BJ (cell line): ENCODE measurements at regions of chr19 and their contacts with region 1.

Region 1: DNA sequence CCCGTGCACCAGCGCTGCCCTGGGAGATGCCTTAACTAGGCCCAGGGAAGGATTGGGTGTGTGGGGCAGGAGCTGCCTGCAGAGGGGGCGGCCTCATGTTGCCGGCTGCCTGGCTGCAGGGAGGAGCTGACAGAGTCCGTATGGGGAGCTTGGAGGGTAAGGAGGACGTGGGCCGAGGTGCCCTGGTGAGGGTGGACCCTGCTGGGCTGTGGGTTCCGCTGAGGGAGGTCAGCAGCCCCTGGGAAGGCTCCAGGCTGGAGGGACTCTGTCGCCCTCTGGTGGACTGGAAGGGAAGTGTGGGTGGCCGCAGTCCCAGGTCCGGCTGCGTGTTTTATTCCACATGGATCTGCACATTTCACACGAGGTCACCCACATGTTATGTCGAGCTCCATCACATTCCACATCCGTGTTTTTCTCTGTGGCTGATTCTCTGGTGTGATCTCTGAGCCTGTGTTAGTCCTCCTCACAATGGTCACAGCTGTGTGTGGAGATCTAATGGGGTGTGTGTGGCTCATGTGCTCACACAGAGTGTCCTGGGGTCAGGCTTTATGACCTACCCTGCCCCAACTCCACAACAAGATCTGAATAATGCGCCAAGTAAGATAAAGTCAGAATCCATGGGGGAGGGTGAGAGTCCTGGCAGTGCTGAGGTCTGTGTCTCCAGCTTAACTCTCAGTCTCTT is 1.8 kb upstream of the CEACAM8 start:
- DNase-seq: no peak
- H3K4me3 ChIP-seq: no peak overlapping the region
- H3K27me3 ChIP-seq: peaks cover 10% of the 10 kb centered on the region
- CTCF ChIP-seq: peak; percentile 95

Region 2: DNA sequence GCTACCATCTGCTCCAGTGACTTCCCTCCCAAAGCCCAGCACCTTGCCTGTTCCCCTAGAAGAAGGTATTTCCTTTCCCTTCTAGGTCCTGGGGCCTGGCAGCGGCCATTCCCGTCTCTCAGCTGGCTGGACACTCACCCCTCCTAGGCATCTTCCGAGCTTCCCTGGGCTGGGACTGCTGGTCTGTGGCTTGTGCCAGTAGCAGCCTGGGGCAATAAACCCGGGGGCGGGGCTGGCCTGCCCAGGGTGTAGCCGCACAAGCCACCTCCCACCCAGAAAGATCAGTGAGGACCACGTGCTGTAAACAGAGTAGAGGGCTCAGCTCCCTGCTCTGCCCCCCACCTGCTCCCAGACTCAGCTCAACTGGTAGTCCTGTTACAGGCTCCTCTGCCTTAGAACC is 184.3 kb before region 1 on chr19:
- CTCF ChIA-PET with region 1: no interaction called
- POLR2A ChIA-PET with region 1: no interaction called
- DNase-seq: no peak
- H3K4me3 ChIP-seq: no peak overlapping the region
- H3K27me3 ChIP-seq: no peaks in the 10 kb centered on the region
- CTCF ChIP-seq: no peak

Region 3: GRCh38 chr19:42529248-42529764 is 67.2 kb before region 1 on chr19:
- CTCF ChIA-PET with region 1: no interaction called
- POLR2A ChIA-PET with region 1: no interaction called
- DNase-seq: no peak
- H3K4me3 ChIP-seq: no peak overlapping the region
- H3K27me3 ChIP-seq: peaks cover 6% of the 10 kb centered on the region; the same call in 1 of the 2 replicates
- CTCF ChIP-seq: peak; percentile 93

Region 4: GRCh38 chr19:42563352-42564210 is 33.0 kb before region 1 on chr19:
- CTCF ChIA-PET with region 1: interaction called, 26 read pairs
- POLR2A ChIA-PET with region 1: no interaction called
- DNase-seq: no peak
- H3K4me3 ChIP-seq: no peak overlapping the region
- H3K27me3 ChIP-seq: peaks cover 20% of the 10 kb centered on the region
- CTCF ChIP-seq: peak; percentile 80

Region 5: DNA sequence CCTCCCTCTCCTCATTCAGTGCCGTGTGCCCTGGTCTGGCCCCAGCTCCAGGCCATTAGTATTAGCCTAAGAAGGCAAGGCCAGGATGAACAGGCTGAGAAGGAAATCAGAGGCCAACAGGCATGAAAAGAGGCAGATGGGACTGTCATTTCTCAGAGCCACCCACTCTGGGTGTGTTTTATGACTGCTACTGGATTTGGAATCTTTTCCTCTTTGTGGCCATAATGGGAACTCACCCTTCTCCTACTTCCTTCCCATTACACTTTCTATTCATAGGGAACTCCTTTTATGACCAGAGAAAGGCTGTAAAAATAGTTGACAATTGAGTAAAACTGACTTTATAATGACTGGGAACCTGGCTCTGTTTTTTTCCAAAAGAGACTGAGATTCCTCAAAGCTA is 19.5 kb before region 1 on chr19:
- CTCF ChIA-PET with region 1: interaction called, 18 read pairs
- POLR2A ChIA-PET with region 1: no interaction called
- DNase-seq: no peak
- H3K4me3 ChIP-seq: no peak overlapping the region
- H3K27me3 ChIP-seq: peaks cover 7% of the 10 kb centered on the region; the same call in 1 of the 2 replicates
- CTCF ChIP-seq: no peak

Region 6: GRCh38 chr19:42584466-42584865 is 12.1 kb before region 1 on chr19:
- CTCF ChIA-PET with region 1: interaction called, 27 read pairs
- POLR2A ChIA-PET with region 1: no interaction called
- DNase-seq: no peak
- H3K4me3 ChIP-seq: no peak overlapping the region
- H3K27me3 ChIP-seq: peaks cover 8% of the 10 kb centered on the region; the same call in 1 of the 2 replicates
- CTCF ChIP-seq: no peak

Region 7: DNA sequence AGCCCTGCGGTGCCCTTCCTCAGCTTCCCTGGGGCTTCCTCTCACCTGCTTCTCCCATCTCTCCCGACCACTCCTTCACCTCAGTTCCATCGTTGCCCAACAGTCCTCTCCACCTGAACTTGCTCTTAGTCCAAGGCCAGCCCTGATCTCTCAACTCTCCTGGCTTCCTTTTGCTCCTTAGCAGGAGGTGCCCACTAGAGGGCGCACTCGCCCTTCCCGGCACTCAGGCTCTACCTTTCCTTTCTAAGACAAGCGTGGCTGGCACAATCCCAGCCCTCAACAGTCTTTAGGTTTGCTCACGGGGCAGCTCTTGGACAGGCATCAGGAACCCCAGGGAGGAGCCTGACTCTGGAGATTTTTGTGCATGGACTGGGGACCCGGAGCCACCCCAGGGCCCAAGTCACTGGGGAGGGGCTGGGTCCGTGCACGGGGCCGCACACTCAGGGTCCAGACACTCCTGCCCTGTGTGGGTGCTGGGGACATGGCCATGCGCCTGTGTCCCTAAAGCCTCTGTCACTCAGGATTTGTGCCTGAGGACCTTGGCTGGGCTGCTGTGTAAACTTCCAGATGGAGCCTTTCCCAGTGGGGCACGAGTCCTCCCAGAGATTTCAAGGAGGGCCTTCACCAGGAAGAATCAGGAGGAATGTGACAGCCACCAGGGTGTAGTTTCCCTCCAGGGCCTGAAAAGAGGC is 10.3 kb after region 1 on chr19:
- CTCF ChIA-PET with region 1: interaction called, 19 read pairs
- POLR2A ChIA-PET with region 1: no interaction called
- DNase-seq: no peak
- H3K4me3 ChIP-seq: no peak overlapping the region
- H3K27me3 ChIP-seq: no peaks in the 10 kb centered on the region
- CTCF ChIP-seq: peak; percentile 78

Region 8: DNA sequence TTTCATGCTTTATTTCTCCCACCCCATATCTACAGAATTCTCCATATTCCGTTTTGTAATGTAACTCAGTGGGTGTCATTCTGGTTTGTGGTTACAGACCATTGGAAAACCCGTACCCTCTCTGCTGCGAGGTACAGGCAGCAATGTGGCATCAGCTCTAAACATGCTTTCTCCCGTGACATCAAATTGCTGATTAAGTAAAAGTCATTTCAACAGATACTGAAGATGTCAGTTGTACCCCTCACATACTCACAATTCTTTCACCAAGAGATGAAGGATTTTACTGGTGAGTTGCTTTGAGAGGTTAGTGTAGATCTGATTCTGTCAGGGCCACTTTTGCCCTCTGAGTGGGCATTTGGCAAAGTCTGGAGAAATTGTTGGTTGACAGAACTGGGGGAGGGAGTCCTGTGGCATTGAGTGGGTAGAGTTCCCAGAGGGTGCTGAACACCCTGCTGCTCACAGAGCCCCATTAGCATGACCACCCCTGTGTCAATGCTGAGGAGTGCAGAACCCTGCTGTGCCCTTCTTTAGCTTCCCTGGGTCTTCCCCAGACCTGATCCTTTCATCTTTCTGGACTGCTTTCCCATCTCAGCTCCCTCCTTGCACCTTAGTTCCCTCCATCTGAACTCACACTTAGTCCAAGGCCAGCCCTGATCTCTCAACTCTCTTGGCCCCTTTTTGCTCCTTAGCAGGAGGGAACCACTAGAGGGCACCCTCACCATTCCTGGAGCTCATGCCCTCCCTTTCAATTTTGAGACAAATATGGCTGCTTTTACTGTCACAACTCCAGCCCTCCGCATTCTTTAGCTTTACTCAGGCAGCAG is 38.1 kb after region 1 on chr19:
- CTCF ChIA-PET with region 1: interaction called, 13 read pairs
- POLR2A ChIA-PET with region 1: no interaction called
- DNase-seq: no peak
- H3K4me3 ChIP-seq: no peak overlapping the region
- H3K27me3 ChIP-seq: peaks cover 7% of the 10 kb centered on the region; the same call in 1 of the 2 replicates
- CTCF ChIP-seq: peak; percentile 87